ENCODE measurements at regions of chr15 and their contacts with region 1.

Region 1: DNA sequence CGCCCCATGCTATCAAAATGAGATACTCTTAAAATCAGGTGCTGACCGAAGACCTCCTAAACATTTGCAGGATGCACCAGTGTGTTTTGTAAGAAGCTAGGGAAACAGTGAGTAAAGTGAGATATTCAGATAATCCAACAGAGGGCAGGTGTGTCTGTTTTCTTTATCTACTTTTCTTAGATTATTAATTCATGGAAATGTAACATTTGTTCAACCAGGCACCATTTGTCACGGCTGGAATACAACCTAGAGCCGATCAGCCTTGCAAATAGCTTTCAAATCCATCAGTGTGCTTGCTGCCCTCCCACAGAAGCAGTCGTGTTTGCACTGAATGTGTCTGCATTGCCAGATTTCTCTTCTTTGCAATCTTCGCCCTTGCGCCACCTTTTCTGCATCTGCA is 201.9 kb upstream of the CHRM5 start:
- DNase-seq: no peak
- H3K4me3 ChIP-seq: no peak overlapping the region
- H3K27ac ChIP-seq: no peak overlapping the region
- H3K4me1 ChIP-seq: no peaks in the 10 kb centered on the region
- H3K27me3 ChIP-seq: peaks cover 3% of the 10 kb centered on the region
- CTCF ChIP-seq: no peak

Region 2: DNA sequence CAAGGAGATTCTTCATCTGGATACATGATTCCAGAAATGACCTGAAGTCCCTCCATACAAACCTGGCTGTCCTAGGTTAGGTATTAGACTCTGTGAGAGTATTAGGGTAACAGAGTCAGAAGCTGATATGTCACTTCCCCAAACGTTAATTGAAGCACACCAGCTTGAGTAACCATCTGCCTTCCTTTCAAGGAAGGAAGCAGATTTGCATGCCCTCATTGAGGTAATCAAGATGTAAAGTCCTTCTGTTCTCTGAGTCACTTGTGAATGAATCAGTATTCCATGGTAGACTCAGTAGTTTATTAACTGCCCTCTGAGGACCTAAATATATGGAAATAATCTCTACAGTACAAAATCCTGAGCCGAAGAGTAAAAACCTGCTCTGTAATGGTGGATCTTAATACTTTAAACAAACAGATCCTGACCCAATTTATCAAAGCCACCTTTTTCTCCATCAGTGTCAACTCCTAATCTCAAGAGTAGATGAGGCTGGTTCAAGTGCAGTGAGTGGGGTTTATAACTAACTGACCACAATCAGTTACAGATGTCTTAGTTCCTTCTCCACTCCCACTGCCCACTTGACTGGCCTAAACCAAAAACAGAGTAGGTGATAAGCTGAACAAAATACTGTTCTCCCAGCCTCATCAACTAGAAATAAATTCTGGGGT is 44.2 kb before region 1 on chr15:
- CTCF ChIA-PET with region 1: interaction called, 13 read pairs
- POLR2A ChIA-PET with region 1: no interaction called
- intact Hi-C with region 1: no loop called
- DNase-seq: no peak
- H3K4me3 ChIP-seq: no peak overlapping the region
- H3K27ac ChIP-seq: no peak overlapping the region
- H3K4me1 ChIP-seq: no peaks in the 10 kb centered on the region
- H3K27me3 ChIP-seq: no peaks in the 10 kb centered on the region
- CTCF ChIP-seq: no peak

Region 3: DNA sequence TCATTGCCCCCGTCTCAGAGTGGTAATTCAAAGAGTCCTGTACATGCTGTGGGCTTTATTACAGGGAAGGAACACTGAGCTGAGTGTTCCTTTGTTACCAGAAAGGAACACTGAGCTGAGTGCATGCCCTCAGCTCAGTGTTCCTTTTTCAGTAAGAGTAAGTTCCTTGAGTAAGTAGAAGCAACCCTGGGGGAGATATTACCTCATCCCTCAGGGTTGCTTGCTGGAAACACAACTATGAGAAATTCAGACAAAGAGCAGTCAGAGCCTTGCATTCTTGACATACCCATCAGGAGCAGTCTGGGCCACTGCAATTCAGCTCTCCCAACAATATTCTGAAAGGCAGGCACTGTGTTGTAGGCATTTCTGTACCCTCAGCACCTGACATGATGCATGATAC is 218.9 kb after region 1 on chr15:
- CTCF ChIA-PET with region 1: no interaction called
- POLR2A ChIA-PET with region 1: no interaction called
- intact Hi-C with region 1: loop called (anchors 10 kb)
- DNase-seq: peak; percentile 10
- H3K4me3 ChIP-seq: no peak overlapping the region
- H3K27ac ChIP-seq: no peak overlapping the region
- H3K4me1 ChIP-seq: no peaks in the 10 kb centered on the region
- H3K27me3 ChIP-seq: no peaks in the 10 kb centered on the region
- CTCF ChIP-seq: no peak